Activated CD4-positive, alpha-beta memory T cell treated with anti-CD3 and anti-CD28 coated beads, Interleukin-2, amount 10 ng/mL, durations not matched to agents 7 days and 5 days (primary cell): ENCODE measurements at regions of chr3 and their contacts with region 1.

Region 1: GRCh38 chr3:141460097-141460704 is 26.6 kb upstream of the RASA2 start:
- DNase-seq: peak; percentile 89
- H3K4me3 Mint-ChIP-seq: no peak overlapping the region
- H3K27ac Mint-ChIP-seq: no peak overlapping the region
- H3K4me1 Mint-ChIP-seq: peaks cover 18% of the 10 kb centered on the region
- H3K27me3 Mint-ChIP-seq: no peaks in the 10 kb centered on the region

Region 2: DNA sequence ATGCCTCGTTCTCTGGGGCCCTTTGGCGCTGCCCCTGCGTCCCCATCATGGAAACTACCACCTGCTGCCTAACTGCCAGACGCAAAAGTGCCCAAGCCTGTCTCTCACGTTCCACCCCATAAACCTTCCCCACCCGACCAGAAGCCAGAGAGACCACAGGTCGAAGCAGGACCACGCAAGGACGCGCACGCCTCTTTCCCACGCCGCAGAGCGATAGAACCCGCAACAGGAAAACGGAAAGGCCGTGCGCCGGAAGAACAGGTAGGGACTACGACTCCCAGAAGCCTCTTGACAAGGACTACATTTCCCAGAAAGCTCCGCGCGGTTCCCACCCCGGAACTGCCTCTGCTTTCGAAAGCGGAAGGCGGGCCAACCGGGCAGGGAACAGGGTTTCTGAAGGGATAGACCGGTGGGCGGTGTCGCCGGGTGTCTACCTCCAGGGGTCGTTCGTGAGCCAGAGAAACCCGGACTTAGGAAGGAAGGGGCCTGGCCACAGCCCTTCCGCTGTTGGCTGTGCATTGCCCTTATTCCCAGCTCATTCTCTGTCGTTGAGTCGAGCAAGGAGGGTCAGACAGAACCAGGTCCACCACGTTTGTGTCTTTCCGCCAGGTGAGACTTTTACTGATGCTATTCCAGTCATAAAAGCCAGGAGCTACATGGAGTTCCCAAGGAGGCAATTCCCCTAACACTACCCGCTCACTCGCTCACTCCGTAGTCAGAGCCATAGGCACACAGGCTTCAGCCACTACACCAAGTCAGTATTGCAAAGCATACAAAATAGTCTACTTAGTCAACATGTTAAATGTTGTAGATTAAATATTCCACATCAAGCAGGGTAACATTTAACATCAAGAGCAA is 148.5 kb before region 1 on chr3:
- CTCF ChIA-PET with region 1: interaction called, 374 read pairs
- POLR2A ChIA-PET with region 1: interaction called, 31 read pairs
- DNase-seq: peak; percentile 99
- H3K4me3 Mint-ChIP-seq: peak overlapping the region; percentile 93
- H3K27ac Mint-ChIP-seq: peak overlapping the region; percentile 86
- H3K4me1 Mint-ChIP-seq: peaks cover 58% of the 10 kb centered on the region
- H3K27me3 Mint-ChIP-seq: no peaks in the 10 kb centered on the region

Region 3: GRCh38 chr3:141477224-141477623 is 17.0 kb after region 1 on chr3:
- CTCF ChIA-PET with region 1: interaction called, 11 read pairs
- POLR2A ChIA-PET with region 1: no interaction called
- DNase-seq: no peak
- H3K4me3 Mint-ChIP-seq: no peak overlapping the region
- H3K27ac Mint-ChIP-seq: no peak overlapping the region
- H3K4me1 Mint-ChIP-seq: peaks cover 29% of the 10 kb centered on the region
- H3K27me3 Mint-ChIP-seq: peaks cover 16% of the 10 kb centered on the region

Region 4: DNA sequence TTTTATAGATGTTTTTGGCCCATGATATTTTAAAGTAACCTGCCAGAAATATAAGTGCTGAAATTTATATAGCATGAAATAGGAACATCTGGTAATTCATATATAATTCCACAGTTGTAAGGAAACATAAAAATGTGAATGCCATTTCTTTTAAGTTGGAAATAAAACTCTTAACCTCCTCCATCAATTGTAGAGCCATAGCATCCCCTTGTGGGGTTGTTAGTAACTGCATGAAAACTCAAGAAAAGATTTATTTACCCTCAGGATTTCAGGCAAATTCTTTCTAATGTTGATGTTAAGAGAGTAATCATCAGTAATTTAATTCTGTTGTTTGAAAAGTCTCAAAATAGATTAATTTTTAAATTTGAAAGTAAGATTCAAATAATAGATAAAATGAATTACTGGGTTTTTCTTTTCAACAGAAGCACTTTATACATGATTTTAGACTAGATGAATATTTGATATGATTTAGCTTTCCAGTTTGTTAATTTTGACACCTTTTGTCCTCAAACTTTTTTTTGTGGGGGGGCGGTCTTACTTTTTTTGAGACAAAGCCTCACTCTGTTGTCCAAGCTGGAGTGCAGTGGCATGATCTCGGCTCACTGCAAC is 101.3 kb after region 1 on chr3:
- CTCF ChIA-PET with region 1: interaction called, 107 read pairs
- POLR2A ChIA-PET with region 1: interaction called, 3 read pairs
- DNase-seq: peak; percentile 32
- H3K4me3 Mint-ChIP-seq: no peak overlapping the region
- H3K27ac Mint-ChIP-seq: no peak overlapping the region
- H3K4me1 Mint-ChIP-seq: peaks cover 28% of the 10 kb centered on the region
- H3K27me3 Mint-ChIP-seq: no peaks in the 10 kb centered on the region

Region 5: GRCh38 chr3:141575879-141576743 is 115.9 kb after region 1 on chr3:
- CTCF ChIA-PET with region 1: interaction called, 28 read pairs
- POLR2A ChIA-PET with region 1: no interaction called
- DNase-seq: no peak
- H3K4me3 Mint-ChIP-seq: peak overlapping the region; percentile 51
- H3K27ac Mint-ChIP-seq: peak overlapping the region; percentile 60
- H3K4me1 Mint-ChIP-seq: peaks cover 8% of the 10 kb centered on the region
- H3K27me3 Mint-ChIP-seq: no peaks in the 10 kb centered on the region

Region 6: DNA sequence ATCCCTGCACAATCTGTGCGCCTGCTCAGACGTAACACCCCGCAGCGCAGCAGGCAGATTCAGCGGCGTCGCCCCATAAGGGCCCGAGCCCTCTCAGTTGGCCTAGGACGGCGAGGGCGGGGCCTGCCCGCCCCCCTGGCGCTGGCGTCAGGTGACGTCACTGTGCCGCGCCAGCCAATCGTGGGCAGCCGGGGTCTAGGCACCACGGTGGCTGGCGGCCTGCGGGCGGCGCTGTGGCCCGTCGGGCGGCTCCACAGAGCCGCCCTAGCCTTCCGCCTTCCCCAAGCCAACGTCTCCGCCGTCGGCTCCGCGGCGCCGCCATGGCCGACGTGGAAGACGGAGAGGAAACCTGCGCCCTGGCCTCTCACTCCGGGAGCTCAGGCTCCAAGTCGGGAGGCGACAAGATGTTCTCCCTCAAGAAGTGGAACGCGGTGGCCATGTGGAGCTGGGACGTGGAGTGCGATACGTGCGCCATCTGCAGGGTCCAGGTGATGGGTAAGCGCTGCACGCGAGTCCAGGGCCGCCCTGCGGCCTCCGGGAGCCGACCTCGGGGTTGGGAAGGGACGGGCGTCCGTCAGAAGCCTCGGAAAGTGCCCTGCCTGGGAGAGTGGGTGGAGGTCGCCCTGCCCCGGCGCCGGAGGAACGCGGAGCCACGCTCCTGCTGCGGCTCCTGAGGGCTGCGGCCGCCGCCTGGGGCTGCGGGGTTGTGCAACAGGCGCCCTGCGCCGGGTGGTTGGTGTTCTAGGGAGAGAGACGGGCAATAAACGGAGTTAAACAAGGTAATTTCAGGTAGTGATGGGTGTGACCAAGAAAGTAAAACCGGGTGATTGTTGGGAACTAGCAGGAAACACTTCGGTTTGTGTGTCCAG is 278.1 kb after region 1 on chr3 and contains the start of gene RNF7:
- CTCF ChIA-PET with region 1: no interaction called
- POLR2A ChIA-PET with region 1: no interaction called
- DNase-seq: peak; percentile 98
- H3K4me3 Mint-ChIP-seq: peak within 1 kb of the TSS; percentile 88
- H3K27ac Mint-ChIP-seq: peak within 1 kb of the TSS; percentile 98
- H3K4me1 Mint-ChIP-seq: peaks cover 42% of the 10 kb centered on the region
- H3K27me3 Mint-ChIP-seq: peaks cover 3% of the 10 kb centered on the region
- total RNA-seq, gene RNF7: 68.8 to 72.9 TPM

Region 7: GRCh38 chr3:141913150-141913811 is 453.1 kb after region 1 on chr3:
- CTCF ChIA-PET with region 1: interaction called, 14 read pairs
- POLR2A ChIA-PET with region 1: no interaction called
- DNase-seq: peak; percentile 58
- H3K4me3 Mint-ChIP-seq: no peak overlapping the region
- H3K27ac Mint-ChIP-seq: no peak overlapping the region
- H3K4me1 Mint-ChIP-seq: peaks cover 4% of the 10 kb centered on the region
- H3K27me3 Mint-ChIP-seq: no peaks in the 10 kb centered on the region

Region 8: DNA sequence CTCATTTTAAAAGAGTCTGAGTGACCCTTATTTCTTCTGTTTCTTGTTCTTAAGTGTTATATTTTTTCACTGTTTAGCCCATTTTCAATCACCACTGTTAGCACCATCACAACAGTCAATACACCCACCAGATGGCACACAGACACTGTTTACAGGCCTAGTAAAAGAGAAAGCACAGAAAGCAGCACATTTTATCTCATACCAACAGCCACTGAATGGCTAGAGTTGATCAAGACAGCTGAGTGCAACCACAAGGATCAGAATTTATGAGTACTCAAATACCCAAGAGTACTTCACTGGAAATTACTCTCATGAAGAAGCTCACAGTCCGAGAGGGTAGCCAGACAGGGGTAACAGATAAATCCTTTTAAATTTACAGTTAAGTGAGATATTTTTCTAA is 562.2 kb after region 1 on chr3:
- CTCF ChIA-PET with region 1: no interaction called
- POLR2A ChIA-PET with region 1: no interaction called
- DNase-seq: no peak
- H3K4me3 Mint-ChIP-seq: no peak overlapping the region
- H3K27ac Mint-ChIP-seq: no peak overlapping the region
- H3K4me1 Mint-ChIP-seq: peaks cover 33% of the 10 kb centered on the region
- H3K27me3 Mint-ChIP-seq: no peaks in the 10 kb centered on the region